HEK293 (cell line): ENCODE measurements at regions of chr7 and their contacts with region 1.

Region 1: GRCh38 chr7:99504603-99505323 is at the start of gene ZKSCAN5:
- H3K4me3 ChIP-seq: peak within 1 kb of the TSS; percentile 95
- H3K27ac ChIP-seq: peak within 1 kb of the TSS; percentile 51; the same call in 1 of the 2 replicates
- H3K4me1 ChIP-seq: no peaks in the 10 kb centered on the region
- CTCF ChIP-seq: no peak; the same call in 1 of the 2 replicates

Region 2: DNA sequence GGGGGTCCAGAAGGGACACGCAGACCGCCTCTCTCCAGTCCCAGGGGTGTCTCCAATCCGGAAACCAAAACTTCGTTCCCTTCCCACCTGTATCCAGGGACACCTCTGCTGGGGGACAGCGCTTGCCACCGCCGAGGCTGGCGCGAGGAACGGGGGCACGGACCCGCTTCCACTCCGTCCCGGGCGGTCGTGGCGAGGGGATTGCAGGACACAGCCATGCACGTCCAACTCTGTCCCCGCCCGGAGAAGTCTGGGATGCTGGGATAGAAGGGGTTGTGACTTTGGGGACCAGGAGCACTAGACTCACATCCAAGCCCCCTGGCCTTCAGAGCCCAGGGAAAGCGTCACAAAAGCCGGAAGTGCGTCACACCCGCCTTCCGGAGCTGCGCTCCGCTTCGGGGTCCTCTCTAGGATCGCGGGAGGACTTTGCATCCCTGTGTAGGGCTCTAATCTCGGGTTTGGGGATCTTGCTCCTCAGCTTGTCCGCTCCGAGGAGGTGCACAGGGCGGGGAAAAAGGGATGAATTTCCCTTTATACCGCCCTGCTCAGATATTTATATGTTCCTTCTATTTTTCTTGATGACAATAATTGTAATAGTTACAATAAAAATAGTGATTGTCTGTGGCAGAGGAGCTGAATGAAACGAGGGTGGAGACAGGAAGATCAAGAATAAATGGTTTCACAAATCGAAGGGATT is 47.2 kb after region 1 on chr7 and contains the start of gene FAM200A:
- CTCF ChIA-PET with region 1: no interaction called
- POLR2A ChIA-PET with region 1: interaction called, 26 read pairs
- H3K4me3 ChIP-seq: peak within 1 kb of the TSS; percentile 97
- H3K27ac ChIP-seq: peak within 1 kb of the TSS; percentile 11
- H3K4me1 ChIP-seq: no peaks in the 10 kb centered on the region
- CTCF ChIP-seq: no peak

Region 3: DNA sequence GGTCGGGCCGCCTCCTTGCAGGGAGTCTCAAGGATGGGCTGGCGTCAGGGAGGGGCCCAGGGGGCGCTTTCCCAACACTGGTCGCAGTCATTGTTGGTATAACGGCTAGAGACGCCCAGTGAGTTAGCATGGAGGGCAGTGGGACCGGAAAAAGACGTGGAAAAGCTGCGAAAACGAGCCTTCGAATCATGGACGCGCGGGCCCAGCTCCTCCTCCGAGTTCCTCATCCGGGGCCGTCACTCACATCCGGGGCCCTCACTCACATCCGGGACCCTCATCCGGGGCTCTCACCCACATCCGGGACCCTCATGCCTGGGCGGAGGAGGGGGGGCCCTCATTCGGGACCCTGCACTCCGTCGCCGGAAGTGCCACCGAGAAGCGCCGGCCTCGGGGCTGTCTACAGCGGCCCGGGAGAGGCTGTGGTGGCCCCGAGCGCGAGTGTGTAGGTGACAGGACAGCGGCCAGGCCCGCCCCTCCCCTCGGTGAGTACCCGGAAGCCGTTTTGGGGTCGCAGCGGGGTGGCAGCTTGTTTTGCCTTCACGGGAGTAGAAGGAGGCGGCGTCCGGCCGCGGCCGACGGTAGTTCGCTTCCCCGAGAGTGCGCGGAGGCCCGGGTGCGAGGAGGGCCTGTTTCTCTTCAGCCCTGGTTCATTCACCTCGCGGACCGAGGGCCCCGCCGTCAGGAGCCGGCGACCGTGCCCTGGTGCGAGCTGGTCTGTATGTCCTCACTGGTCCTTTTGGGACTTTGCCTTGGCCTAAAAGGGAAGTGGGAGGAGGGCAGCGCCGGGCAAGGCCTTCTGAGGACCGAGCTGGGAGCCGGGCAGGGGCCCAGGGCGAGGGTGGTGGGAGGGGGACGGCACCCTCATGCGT is 53.8 kb after region 1 on chr7 and contains the start of gene ZNF655:
- CTCF ChIA-PET with region 1: no interaction called
- POLR2A ChIA-PET with region 1: interaction called, 26 read pairs
- H3K4me3 ChIP-seq: peak within 1 kb of the TSS; percentile 93
- H3K27ac ChIP-seq: peak within 1 kb of the TSS; percentile 90
- H3K4me1 ChIP-seq: peaks cover 7% of the 10 kb centered on the region
- CTCF ChIP-seq: no peak

Region 4: GRCh38 chr7:99616359-99617191 is 111.8 kb after region 1 on chr7 and contains the start of gene ZSCAN25:
- CTCF ChIA-PET with region 1: no interaction called
- POLR2A ChIA-PET with region 1: interaction called, 17 read pairs
- H3K4me3 ChIP-seq: peak within 1 kb of the TSS; percentile 93
- H3K27ac ChIP-seq: peak within 1 kb of the TSS; percentile 71
- H3K4me1 ChIP-seq: no peaks in the 10 kb centered on the region
- CTCF ChIP-seq: peak; percentile 93